Dorsolateral prefrontal cortex (tissue), 120 donors: ENCODE measurements at regions of chr3 and their contacts with region 1.

Region 1: DNA sequence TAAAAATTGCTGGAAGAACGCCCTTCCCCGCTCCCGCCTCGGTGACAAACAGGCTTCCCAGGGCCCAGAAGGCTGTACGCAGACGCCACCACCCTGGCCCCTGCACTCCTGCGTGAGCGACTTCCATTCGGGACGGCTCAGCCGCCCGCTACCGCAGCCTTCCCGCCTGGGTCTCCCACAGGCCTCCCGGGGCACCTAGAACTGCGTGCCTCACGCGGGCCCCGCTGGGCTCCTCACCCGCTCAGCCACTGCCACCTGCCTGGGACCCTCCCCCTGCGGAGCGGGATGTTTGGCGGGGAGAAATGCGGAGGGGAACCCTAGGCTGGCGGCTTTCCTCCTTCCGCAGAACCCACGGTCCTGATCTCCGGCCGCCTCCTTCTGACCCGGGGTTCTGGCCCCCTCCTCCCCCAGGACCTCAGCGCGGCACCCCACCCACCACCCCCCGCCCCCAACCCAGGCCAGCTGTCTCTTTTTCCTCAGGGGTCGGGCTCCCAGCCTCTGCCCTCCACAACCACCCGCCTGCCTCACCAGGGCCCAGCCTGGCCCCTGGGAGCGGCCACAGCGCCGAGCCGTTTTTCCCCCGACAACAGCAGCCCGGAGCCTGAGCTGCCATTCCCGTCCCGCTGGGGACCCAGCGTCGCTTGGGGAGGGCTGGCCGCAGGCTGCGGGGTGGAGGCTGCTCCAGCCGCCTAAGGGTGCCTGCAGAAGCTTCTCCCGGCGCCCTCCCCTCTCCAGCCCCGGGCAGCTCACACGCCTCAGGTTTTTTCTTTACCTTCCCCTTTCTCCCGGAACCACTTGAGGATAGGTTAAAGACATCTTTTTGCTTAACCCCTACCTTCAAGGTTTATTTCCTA is 27.5 kb upstream of the RAB7A start:
- DNase-seq: peak in 7 of 10 donors; percentile 36 to 65 (median 48)
- H3K4me3 ChIP-seq: peak overlapping the region; percentile 41 to 85 (median 67)
- H3K27ac ChIP-seq: peak overlapping the region in 57 of 59 donors; percentile 27 to 92 (median 77)
- H3K27me3 ChIP-seq: no peaks in the 10 kb centered on the region
- CTCF ChIP-seq: no peak

Region 2: GRCh38 chr3:128665362-128666038 is 32.9 kb before region 1 on chr3:
- intact Hi-C with region 1: loop called (anchors 1 kb)
- DNase-seq: no peak
- H3K4me3 ChIP-seq: no peak overlapping the region
- H3K27ac ChIP-seq: no peak overlapping the region
- H3K27me3 ChIP-seq: no peaks in the 10 kb centered on the region
- CTCF ChIP-seq: peak in 1 of 56 donors; percentile 15

Region 3: GRCh38 chr3:128804017-128804810 is 105.8 kb after region 1 on chr3:
- intact Hi-C with region 1: no loop called
- DNase-seq: no peak
- H3K4me3 ChIP-seq: peak overlapping the region in 31 of 59 donors; percentile 1 to 46 (median 21)
- H3K27ac ChIP-seq: peak overlapping the region in 48 of 59 donors; percentile 1 to 80 (median 40)
- H3K27me3 ChIP-seq: no peaks in the 10 kb centered on the region
- CTCF ChIP-seq: no peak